OCI-LY7 (cell line): ENCODE measurements at regions of chr11 and their contacts with region 1.

Region 1: DNA sequence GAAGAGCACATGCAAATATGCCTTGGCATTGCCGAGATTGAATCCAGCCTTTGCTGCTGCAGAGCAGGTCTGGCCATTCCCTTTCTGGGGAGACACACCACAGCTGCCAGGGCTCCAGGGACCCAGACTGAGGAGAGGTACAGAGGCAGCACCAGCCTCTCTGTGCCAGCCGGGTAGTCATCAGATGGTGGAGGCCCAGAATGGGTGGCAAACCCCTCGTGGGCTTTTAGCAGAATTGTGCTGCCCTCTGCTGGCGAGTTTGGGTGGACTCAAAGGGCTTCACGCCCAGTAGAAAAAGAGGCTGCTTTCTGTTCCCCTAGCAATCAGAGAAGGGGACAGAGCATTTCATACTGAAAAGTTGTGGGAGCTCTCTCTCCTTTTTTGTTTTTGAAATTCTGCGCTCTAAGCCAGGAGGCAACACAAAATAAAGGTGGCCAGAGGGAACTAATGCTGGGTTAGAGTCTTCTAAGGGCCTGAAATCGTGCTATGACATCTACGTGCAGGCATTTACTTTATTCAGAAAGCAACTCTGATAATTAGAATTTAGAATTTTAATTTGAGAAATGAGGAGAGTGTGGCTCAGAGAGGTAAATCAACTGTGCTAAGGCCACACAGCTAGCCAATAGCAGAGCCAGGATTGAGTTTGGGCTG is 158.8 kb upstream of the NAV2 start:
- DNase-seq: peak; percentile 81
- H3K4me3 ChIP-seq: no peak overlapping the region
- H3K27ac ChIP-seq: no peak overlapping the region
- H3K4me1 ChIP-seq: no peaks in the 10 kb centered on the region
- CTCF ChIP-seq: peak; percentile 96

Region 2: GRCh38 chr11:19071255-19071654 is 482.6 kb before region 1 on chr11:
- CTCF ChIA-PET with region 1: no interaction called
- POLR2A ChIA-PET with region 1: no interaction called
- intact Hi-C with region 1: loop called (anchors 1 kb)
- DNase-seq: peak; percentile 80
- H3K4me3 ChIP-seq: no peak overlapping the region
- H3K27ac ChIP-seq: no peak overlapping the region
- H3K4me1 ChIP-seq: no peaks in the 10 kb centered on the region
- CTCF ChIP-seq: peak; percentile 100

Region 3: DNA sequence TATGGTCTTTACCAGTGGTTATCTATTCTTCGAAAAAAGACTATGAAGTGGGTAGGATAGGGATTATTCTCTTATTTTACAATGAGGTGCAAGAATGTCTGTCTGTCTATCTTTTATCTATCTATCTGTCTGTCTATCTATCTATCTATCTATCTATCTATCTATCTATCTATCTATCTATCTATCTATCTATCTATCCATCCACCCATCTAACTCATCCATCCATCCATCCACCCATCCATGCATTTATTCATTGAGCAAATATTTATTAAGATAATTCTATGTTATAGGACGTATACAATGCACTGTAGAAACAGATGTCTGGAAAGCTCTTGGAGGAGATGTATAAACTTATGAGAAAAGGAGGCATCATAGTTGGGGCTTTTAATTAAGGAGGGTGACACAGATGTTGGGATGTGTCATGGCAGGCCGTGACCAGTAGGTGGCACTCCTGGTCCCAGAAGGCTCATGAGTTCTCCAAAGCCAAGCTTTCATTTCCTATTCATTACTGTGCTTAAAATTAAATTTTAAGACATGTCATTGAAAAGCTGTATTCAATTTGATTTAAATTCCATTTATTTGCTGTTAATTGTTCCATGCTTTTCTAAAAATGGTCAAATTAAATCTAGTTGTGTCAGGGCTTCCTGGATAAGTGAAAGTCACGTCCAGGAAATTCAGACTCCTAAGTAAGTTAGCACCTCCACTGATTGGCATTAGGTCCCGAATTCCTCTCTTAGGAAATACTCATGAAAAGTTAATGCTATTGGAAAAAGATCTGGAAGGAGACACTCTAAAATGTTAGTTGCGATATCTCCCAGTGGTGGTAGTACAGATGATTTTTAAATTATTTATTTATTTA is 294.1 kb before region 1 on chr11:
- CTCF ChIA-PET with region 1: no interaction called
- POLR2A ChIA-PET with region 1: interaction called, 3 read pairs
- intact Hi-C with region 1: loop called (anchors 1 kb)
- DNase-seq: peak; percentile 70
- H3K4me3 ChIP-seq: no peak overlapping the region
- H3K27ac ChIP-seq: no peak overlapping the region
- H3K4me1 ChIP-seq: no peaks in the 10 kb centered on the region
- CTCF ChIP-seq: peak; percentile 97

Region 4: DNA sequence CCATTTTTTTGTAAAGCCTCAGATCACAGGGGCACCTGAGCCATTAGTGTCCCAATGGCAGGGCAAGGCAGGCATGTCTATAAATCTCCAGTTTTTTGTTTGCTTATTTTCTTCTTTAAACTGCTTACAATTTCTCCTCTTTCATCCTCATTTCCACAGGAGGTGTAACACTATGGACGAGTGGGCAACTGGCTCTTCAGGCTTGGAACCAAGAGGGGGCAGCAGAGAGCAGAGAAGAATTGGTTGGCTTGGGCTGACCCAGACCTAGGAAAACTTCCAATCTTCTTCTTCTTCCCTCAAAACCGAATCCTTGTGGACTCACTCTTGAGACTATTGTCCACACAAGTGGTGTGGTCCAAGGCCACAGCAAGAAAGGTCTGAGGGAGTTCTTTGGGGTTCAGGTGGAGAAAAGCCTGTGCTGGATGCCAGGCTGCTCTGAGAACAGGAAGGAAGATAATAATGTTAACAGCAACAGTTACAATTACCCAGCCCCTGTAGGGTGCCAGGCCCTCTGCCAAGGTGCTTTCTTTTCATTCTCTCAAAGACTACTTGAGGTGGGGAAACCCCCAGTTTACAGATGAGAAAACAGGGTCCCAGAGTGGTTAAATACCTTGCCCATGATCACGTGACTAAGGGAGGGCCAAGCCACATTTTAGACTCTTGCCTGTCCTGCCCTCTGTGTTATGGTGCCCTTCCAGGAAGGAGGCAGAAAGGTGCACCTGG is 242.3 kb before region 1 on chr11:
- CTCF ChIA-PET with region 1: interaction called, 3 read pairs
- POLR2A ChIA-PET with region 1: no interaction called
- intact Hi-C with region 1: loop called (anchors 1 kb)
- DNase-seq: peak; percentile 58
- H3K4me3 ChIP-seq: no peak overlapping the region
- H3K27ac ChIP-seq: no peak overlapping the region
- H3K4me1 ChIP-seq: no peaks in the 10 kb centered on the region
- CTCF ChIP-seq: peak; percentile 96

Region 5: GRCh38 chr11:19326499-19326898 is 227.3 kb before region 1 on chr11:
- CTCF ChIA-PET with region 1: no interaction called
- POLR2A ChIA-PET with region 1: interaction called, 3 read pairs
- intact Hi-C with region 1: loop called (anchors 5 kb)
- DNase-seq: no peak
- H3K4me3 ChIP-seq: no peak overlapping the region
- H3K27ac ChIP-seq: no peak overlapping the region
- H3K4me1 ChIP-seq: peaks cover 2% of the 10 kb centered on the region
- CTCF ChIP-seq: peak; percentile 55; the same call in 1 of the 2 replicates

Region 6: GRCh38 chr11:19436932-19437331 is 116.9 kb before region 1 on chr11:
- CTCF ChIA-PET with region 1: no interaction called
- POLR2A ChIA-PET with region 1: no interaction called
- intact Hi-C with region 1: no loop called
- DNase-seq: peak; percentile 48
- H3K4me3 ChIP-seq: no peak overlapping the region
- H3K27ac ChIP-seq: peak overlapping the region; percentile 26
- H3K4me1 ChIP-seq: peaks cover 67% of the 10 kb centered on the region
- CTCF ChIP-seq: no peak

Region 7: DNA sequence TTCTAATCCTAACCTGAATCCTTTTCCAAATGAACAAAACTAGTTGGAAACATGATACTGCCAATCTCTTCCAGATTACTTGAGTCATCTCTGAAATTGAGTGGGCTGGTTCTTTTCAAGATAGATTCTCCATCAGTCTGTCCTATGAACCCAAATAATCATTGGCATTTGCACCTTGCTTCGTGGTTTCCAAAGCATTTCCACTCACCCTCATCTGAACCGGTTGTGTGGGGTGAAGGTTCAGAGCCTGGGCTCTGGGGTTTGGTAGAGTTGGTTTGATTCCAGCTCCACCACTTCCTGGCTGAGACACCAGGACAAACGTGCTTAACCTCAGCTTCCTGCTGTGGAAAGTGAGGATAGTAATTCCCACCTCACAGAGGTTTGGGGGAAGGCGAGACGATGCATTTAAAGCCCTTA is 106.7 kb before region 1 on chr11:
- CTCF ChIA-PET with region 1: no interaction called
- POLR2A ChIA-PET with region 1: no interaction called
- intact Hi-C with region 1: no loop called
- DNase-seq: no peak
- H3K4me3 ChIP-seq: no peak overlapping the region
- H3K27ac ChIP-seq: no peak overlapping the region
- H3K4me1 ChIP-seq: peaks cover 33% of the 10 kb centered on the region
- CTCF ChIP-seq: no peak

Region 8: DNA sequence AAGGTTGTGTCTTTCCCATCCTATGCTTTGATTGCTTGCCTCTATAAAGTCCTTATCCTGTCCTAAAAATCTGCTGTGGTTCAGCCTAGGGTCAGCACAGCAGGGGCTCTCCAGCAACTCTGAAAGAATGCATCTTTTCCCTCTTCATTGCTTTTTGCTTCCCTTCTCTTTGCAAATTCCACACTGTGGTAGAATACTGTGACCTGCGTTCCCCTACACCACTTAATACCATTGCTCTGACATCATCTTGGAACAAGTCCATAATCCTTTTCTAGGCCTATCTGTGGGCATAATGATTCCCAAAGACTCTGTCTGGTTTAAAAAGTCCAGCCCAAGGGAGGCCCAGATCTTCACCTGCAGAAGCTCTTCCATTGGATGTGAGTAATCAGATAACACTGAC is 336.5 kb after region 1 on chr11:
- CTCF ChIA-PET with region 1: no interaction called
- POLR2A ChIA-PET with region 1: no interaction called
- intact Hi-C with region 1: no loop called
- DNase-seq: no peak
- H3K4me3 ChIP-seq: no peak overlapping the region
- H3K27ac ChIP-seq: no peak overlapping the region
- H3K4me1 ChIP-seq: no peaks in the 10 kb centered on the region
- CTCF ChIP-seq: no peak

Region 9: GRCh38 chr11:20259506-20259905 is 705.7 kb after region 1 on chr11:
- CTCF ChIA-PET with region 1: no interaction called
- POLR2A ChIA-PET with region 1: no interaction called
- intact Hi-C with region 1: no loop called
- DNase-seq: no peak
- H3K4me3 ChIP-seq: no peak overlapping the region
- H3K27ac ChIP-seq: no peak overlapping the region
- H3K4me1 ChIP-seq: no peaks in the 10 kb centered on the region
- CTCF ChIP-seq: no peak